ENCODE measurements at regions of chr1 and their contacts with region 1.

Region 1: DNA sequence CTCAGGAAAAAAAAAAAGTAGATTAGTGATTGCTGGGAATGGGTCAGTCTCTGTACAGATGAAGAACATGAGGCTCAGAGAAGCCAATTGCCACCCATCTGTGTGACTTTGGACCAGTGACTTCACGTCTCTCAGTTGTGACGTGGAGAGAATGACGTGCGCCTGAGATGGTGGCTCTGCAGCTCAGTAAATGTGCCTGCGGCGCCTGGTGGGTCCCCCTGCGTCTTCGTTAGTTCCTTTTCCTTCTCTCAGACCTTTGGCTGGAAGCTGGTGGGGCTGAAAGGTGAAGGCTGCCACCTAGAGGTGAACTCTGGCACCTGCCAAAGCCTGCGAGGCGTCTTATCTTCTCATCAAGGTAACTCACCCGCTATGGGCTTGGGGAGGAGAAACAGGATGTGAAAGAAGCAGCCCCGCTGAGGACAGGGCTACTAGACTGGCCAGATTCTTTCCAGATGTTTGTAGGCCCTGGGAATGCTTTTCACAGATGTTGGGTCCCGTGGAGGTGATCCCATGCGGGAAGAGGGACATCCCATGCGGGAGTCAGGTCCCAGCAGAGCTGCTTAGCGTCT is 8.7 kb upstream of the E2F2 start:
- DNase-seq: peak; percentile 97
- ATAC-seq: peak; percentile 96
- H3K4me3 Mint-ChIP-seq: peak overlapping the region; percentile 48
- H3K27ac Mint-ChIP-seq: peak overlapping the region; percentile 75
- H3K4me1 Mint-ChIP-seq: peaks cover 20% of the 10 kb centered on the region
- H3K27me3 Mint-ChIP-seq: peaks cover 12% of the 10 kb centered on the region

Region 2: DNA sequence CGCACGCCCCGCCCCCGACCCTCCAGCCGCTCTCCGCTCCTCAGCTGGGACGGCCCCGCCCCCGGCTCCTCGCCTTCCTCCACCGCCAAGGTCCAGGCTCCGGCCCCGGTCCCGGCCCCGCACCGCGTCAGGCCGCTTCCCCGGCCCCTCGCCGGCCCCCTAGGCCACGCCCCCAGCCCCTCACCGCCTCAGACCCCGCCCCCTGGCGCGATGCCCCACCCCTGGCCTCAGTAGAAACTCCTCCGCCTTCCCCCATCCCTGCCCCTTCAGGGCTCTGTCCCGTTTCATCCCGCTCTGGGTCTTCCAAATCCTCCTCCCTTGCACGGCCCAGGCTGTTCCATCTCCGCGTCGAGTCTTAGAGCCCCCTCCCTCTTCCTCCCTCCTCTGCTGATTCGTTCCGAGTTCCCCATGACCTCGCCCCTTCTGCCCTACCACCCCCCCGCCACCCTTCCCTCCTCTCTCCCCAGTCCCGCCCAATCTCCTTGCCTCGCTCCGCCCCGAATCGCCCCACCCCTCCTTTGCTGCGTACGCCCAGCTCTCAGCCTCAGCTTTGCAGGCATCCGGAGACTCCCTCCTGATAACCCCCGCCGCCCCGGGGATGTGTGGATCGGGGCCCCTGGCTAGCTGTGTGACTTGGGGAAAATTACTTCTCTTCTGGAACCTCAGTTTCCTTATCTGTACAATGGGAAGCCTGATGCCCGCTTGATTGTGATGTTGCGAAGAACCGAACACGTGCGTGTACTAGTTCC is 55.4 kb before region 1 on chr1:
- CTCF ChIA-PET with region 1: interaction called, 13 read pairs
- DNase-seq: peak; percentile 93
- ATAC-seq: peak; percentile 91
- H3K4me3 Mint-ChIP-seq: peak overlapping the region; percentile 76
- H3K27ac Mint-ChIP-seq: peak overlapping the region; percentile 46
- H3K4me1 Mint-ChIP-seq: peaks cover 15% of the 10 kb centered on the region
- H3K27me3 Mint-ChIP-seq: peaks cover 66% of the 10 kb centered on the region

Region 3: DNA sequence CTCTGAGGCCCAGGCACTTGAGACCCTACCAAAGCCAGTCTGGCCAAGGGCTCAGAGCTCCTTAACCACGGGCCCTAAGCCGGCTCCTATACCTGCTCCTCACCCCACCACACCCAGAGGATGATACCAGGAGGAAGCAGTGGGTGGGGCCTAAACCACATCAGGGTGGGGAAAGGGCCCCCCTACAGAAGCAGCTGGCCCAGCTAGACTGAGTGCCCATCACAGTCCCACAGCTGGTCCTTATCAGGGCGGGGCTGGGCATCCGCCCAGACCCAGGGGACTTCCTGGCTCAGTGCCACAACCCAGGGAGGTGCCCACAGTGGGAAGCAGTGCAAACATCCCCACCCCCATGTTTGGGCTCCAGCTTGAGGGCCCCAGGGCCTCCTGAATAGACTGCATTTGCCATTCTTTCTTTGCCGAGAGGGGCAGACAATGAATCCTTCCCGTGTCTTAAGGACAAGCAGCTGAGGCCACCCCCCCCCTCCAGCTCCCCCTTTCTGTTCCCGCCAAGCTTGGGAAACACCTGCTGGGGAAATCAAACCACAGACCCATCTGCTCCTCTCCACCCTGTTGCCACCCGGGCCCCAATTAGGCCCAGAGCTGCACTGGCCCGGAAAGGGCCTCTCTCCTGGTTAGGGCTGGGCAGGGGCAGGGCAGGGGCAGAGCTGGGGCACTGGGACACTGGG is 14.9 kb before region 1 on chr1:
- CTCF ChIA-PET with region 1: interaction called, 33 read pairs
- DNase-seq: peak; percentile 69
- ATAC-seq: peak; percentile 11
- H3K4me3 Mint-ChIP-seq: peak overlapping the region; percentile 71
- H3K27ac Mint-ChIP-seq: peak overlapping the region; percentile 85
- H3K4me1 Mint-ChIP-seq: peaks cover 69% of the 10 kb centered on the region
- H3K27me3 Mint-ChIP-seq: no peaks in the 10 kb centered on the region

Region 4: DNA sequence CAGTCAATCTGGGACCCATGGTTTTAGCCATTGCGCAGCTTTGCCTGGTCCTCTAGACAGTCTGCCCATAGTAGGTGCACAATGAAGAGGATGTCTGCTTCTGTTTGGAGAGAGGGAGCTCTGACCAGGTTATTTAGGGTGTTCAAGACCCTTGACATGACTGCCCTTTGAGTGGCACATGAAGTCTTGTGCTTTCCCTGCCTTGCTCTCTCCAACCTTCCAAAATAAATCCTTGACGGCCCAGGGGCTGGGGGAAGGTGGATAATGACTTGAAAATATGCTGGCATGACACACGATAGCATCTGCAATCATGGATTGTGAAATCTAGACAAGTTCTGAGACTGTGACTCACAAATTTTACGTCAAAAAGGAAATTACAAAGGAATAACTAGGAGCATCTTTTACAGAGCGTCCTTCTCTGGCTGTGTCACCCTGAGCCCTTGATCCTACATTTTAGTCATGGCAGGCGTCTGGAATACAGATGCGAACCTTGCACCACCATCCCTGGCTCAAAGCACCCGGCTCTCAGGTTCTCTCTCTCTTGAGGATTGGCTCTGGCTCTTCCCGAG is 45.7 kb after region 1 on chr1:
- CTCF ChIA-PET with region 1: no interaction called
- DNase-seq: no peak
- ATAC-seq: no peak
- H3K4me3 Mint-ChIP-seq: no peak overlapping the region
- H3K27ac Mint-ChIP-seq: no peak overlapping the region
- H3K4me1 Mint-ChIP-seq: peaks cover 8% of the 10 kb centered on the region
- H3K27me3 Mint-ChIP-seq: peaks cover 7% of the 10 kb centered on the region

Region 5: GRCh38 chr1:23619299-23620188 is 79.8 kb after region 1 on chr1:
- CTCF ChIA-PET with region 1: interaction called, 13 read pairs
- DNase-seq: peak; percentile 81
- ATAC-seq: peak; percentile 82
- H3K4me3 Mint-ChIP-seq: peak overlapping the region; percentile 67
- H3K27ac Mint-ChIP-seq: peak overlapping the region; percentile 61
- H3K4me1 Mint-ChIP-seq: peaks cover 36% of the 10 kb centered on the region
- H3K27me3 Mint-ChIP-seq: peaks cover 11% of the 10 kb centered on the region

Region 6: DNA sequence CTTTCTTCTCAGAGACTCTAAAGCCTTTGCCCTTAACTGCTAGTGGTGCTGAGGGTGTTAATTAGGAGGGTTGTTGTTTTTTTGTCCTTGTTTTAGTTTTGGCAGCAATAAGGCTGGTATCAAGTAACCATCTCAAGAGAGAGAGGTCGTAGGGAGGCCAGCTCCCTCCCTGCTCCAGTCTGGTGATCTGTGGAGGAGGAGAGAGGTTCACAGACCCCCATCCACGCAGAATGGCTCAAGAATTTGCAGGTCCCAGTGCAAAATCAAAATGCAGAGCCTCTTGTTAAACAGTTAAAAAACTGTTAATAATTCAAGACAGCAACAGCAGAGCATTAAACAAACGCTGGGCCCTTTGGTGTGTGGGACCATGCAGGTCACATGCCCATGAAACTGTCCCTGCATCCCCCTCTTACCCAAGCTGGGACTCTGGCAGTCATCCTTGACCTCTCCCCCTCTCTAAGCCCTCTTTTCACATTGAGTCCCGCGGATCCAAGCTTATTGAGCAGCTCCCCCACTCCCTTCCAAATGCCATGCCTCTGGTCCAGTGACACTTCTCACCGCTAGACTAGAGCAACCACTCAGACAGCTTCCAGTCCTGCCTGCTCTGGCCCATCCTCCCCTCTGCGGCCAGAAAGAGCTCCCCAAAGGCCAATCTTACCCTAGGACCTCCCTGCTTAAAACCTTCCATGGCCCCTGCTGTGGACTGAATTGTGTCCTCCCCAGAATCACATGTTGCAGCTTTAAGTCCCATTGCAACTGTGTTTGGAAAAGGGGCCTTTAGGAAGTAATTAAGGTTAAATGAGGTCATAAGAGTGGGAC is 104.2 kb after region 1 on chr1:
- CTCF ChIA-PET with region 1: interaction called, 753 read pairs
- DNase-seq: no peak
- ATAC-seq: no peak
- H3K4me3 Mint-ChIP-seq: no peak overlapping the region
- H3K27ac Mint-ChIP-seq: no peak overlapping the region
- H3K4me1 Mint-ChIP-seq: no peaks in the 10 kb centered on the region
- H3K27me3 Mint-ChIP-seq: peaks cover 3% of the 10 kb centered on the region

Region 7: GRCh38 chr1:23664837-23665795 is 125.3 kb after region 1 on chr1:
- CTCF ChIA-PET with region 1: interaction called, 11 read pairs
- DNase-seq: peak; percentile 48
- ATAC-seq: peak; percentile 71
- H3K4me3 Mint-ChIP-seq: no peak overlapping the region
- H3K27ac Mint-ChIP-seq: peak overlapping the region; percentile 34
- H3K4me1 Mint-ChIP-seq: peaks cover 10% of the 10 kb centered on the region
- H3K27me3 Mint-ChIP-seq: peaks cover 3% of the 10 kb centered on the region

Measured in activated CD8-positive, alpha-beta memory T cell treated with anti-CD3 and anti-CD28 coated beads, Interleukin-2, amount 10 ng/mL, durations not matched to agents 7 days and 5 days (primary cell).